Activated T-helper 2 cell treated with anti-CD3 and anti-CD28 coated beads, Interferon-gamma antibody, Interleukin-2, Interleukin-4, amounts not matched to agents 10 μg/mL and 5 μg/mL and 100 μg/mL, durations not matched to agents 14 hours and 24 hours and 36 hours (primary cell): ENCODE measurements at regions of chr10 and their contacts with region 1.

Region 1: GRCh38 chr10:71737001-71737833 is 17.6 kb upstream of the C10orf105 start:
- DNase-seq: no peak
- H3K4me3 Mint-ChIP-seq: no peak overlapping the region
- H3K27ac Mint-ChIP-seq: peak overlapping the region; percentile 96
- H3K4me1 Mint-ChIP-seq: peaks cover 82% of the 10 kb centered on the region
- H3K27me3 Mint-ChIP-seq: no peaks in the 10 kb centered on the region

Region 2: GRCh38 chr10:71748671-71749191 is 11.5 kb after region 1 on chr10:
- intact Hi-C with region 1: loop called (anchors 1 kb)
- DNase-seq: peak; percentile 83
- H3K4me3 Mint-ChIP-seq: peak overlapping the region; percentile 69
- H3K27ac Mint-ChIP-seq: peak overlapping the region; percentile 99
- H3K4me1 Mint-ChIP-seq: peaks cover 85% of the 10 kb centered on the region
- H3K27me3 Mint-ChIP-seq: no peaks in the 10 kb centered on the region